Sigmoid colon (tissue), 7 donors: ENCODE measurements at regions of chr3 and their contacts with region 1.

Region 1: GRCh38 chr3:172129870-172130683 is 90.7 kb downstream of the FNDC3B start:
- DNase-seq: peak; percentile 97
- H3K4me3 ChIP-seq: no peak overlapping the region
- H3K27ac ChIP-seq: peak overlapping the region; percentile 38 to 86 (median 74)
- H3K4me1 ChIP-seq: peaks cover 0 to 78% (median 50%) of the 10 kb centered on the region in 4 donors
- H3K27me3 ChIP-seq: no peaks in the 10 kb centered on the region
- CTCF ChIP-seq: no peak
- EP300 ChIP-seq: peak; percentile 20 to 72 (median 46)
- POLR2A ChIP-seq: no peak

Region 2: GRCh38 chr3:171825222-171825828 is 304.8 kb before region 1 on chr3:
- intact Hi-C with region 1: no loop called
- DNase-seq: peak; percentile 70
- H3K4me3 ChIP-seq: no peak overlapping the region
- H3K27ac ChIP-seq: peak overlapping the region; percentile 23 to 58 (median 36)
- H3K4me1 ChIP-seq: peaks cover 0 to 8% (median 4%) of the 10 kb centered on the region in 4 donors
- H3K27me3 ChIP-seq: no peaks in the 10 kb centered on the region
- CTCF ChIP-seq: no peak
- EP300 ChIP-seq: peak in 1 of 4 donors; percentile 4
- POLR2A ChIP-seq: no peak

Region 3: GRCh38 chr3:172153335-172153861 is 23.3 kb after region 1 on chr3:
- intact Hi-C with region 1: loop called (anchors 1 kb)
- DNase-seq: peak; percentile 98
- H3K4me3 ChIP-seq: no peak overlapping the region
- H3K27ac ChIP-seq: peak overlapping the region; percentile 80 to 90 (median 84)
- H3K4me1 ChIP-seq: peaks cover 2 to 68% (median 52%) of the 10 kb centered on the region in 4 donors
- H3K27me3 ChIP-seq: no peaks in the 10 kb centered on the region
- CTCF ChIP-seq: no peak
- EP300 ChIP-seq: peak in 2 of 4 donors; percentile 13 to 38
- POLR2A ChIP-seq: peak; percentile 18 to 24

Region 4: GRCh38 chr3:172317984-172318383 is 187.9 kb after region 1 on chr3:
- intact Hi-C with region 1: loop called (anchors 5 kb)
- DNase-seq: peak; percentile 73
- H3K4me3 ChIP-seq: no peak overlapping the region
- H3K27ac ChIP-seq: peak overlapping the region; percentile 64 to 89 (median 74)
- H3K4me1 ChIP-seq: peaks cover 0 to 90% (median 78%) of the 10 kb centered on the region in 4 donors
- H3K27me3 ChIP-seq: no peaks in the 10 kb centered on the region
- CTCF ChIP-seq: no peak
- EP300 ChIP-seq: peak in 1 of 4 donors; percentile 52
- POLR2A ChIP-seq: no peak